SK-N-SH (cell line): ENCODE measurements at regions of chr1 and their contacts with region 1.

Region 1: DNA sequence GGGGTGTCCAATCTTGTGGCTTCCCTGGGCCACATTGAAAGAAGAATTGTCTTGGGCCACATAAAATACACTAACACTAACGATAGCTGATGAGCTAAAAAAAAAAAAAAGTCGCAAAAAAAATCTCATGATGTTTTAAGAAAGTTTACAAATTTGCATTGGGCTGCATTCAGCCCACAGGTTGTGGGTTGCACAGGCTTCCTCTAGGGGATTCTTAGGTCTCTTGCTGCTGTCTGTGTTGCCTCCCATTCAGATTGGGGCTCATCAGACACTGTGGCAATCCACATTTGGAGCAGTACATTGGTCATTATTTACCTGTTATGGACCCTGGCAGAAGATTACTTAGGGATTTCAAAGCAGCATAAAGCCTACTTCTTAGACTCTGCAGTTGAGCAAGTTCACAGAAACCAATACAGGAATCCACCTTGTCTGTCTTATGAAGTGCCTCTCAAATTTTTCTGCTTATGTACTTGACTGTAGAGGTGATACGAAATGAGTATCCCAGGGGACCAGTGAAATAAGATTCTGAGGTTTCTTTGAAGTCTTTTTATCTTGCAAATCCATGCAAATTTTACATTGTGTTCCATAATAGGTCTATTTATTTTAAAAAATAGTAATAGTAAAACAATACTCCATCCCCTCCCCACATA is 205.5 kb downstream of the RPS6KC1 start:
- DNase-seq: no peak
- H3K4me3 ChIP-seq: no peak overlapping the region
- H3K27ac ChIP-seq: no peak overlapping the region
- H3K4me1 ChIP-seq: no peaks in the 10 kb centered on the region
- H3K27me3 ChIP-seq: no peaks in the 10 kb centered on the region
- CTCF ChIP-seq: no peak
- EP300 ChIP-seq: no peak
- RAD21 ChIP-seq: no peak

Region 2: GRCh38 chr1:213244664-213245091 is 11.9 kb before region 1 on chr1:
- CTCF ChIA-PET with region 1: interaction called, 18 read pairs
- POLR2A ChIA-PET with region 1: no interaction called
- DNase-seq: peak; percentile 16
- H3K4me3 ChIP-seq: no peak overlapping the region; a peak in 1 of 4 replicates
- H3K27ac ChIP-seq: no peak overlapping the region; a peak in 1 of 4 replicates
- H3K4me1 ChIP-seq: no peaks in the 10 kb centered on the region; a peak in 1 of 4 replicates
- H3K27me3 ChIP-seq: no peaks in the 10 kb centered on the region
- CTCF ChIP-seq: peak; percentile 90
- EP300 ChIP-seq: no peak
- RAD21 ChIP-seq: peak; percentile 85